OCI-LY7 (cell line): ENCODE measurements at regions of chr9 and their contacts with region 1.

Region 1: DNA sequence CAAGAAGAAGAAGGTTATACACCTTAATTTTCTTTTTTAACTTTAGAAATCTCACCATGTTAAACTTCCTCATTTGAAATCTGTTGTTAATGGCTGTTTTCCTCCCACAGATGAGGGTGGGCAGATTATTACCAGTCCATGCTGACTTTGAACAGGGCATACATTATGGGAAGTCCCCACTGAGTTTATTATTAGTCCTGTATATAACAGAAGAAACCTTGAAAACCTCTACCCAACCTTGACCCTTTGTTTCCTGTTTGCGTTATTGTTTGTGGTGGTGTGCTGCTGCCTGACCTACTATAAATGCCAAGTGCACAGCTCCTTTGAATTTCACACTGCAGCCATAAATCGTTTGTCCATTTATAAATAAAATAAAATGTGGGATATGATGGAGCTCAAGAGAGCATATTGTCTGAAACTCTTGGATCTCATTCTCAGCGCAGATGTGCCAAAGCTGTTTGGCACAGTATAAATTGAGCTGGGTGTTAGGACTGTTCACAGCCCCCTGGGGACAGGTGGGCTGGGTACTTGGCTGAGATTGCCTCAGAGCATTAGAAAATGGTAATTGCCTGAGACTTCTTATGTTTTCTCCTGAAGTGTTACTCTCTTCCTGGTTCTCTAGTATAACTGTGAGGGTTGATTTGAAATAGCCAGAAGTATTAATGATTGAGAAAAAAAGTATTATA is 139.6 kb downstream of the SPATA31D1 start:
- DNase-seq: peak; percentile 95
- H3K4me3 ChIP-seq: peak overlapping the region; percentile 50
- H3K27ac ChIP-seq: peak overlapping the region; percentile 99
- H3K4me1 ChIP-seq: peaks cover 73% of the 10 kb centered on the region
- CTCF ChIP-seq: no peak

Region 2: DNA sequence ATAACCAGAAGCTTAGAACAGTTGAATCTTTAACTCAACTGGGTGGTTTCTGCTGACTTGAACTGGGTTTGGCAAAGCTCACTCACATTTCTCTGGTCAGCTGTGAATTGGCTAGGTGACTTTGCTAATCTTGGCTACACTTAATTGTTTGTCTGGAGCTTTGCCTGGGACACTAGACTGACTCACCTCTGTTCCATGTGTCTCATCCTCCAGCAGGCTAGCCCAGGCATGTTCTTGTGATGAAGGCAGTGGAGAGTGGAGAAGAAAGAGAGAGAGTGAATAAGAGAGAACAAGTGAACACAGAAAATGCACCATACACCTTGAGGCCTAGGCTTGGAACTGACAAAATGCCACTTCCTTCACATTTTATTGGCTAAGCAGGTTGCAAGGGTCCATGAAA is 107.0 kb before region 1 on chr9:
- CTCF ChIA-PET with region 1: no interaction called
- POLR2A ChIA-PET with region 1: no interaction called
- intact Hi-C with region 1: no loop called
- DNase-seq: no peak
- H3K4me3 ChIP-seq: no peak overlapping the region
- H3K27ac ChIP-seq: no peak overlapping the region
- H3K4me1 ChIP-seq: no peaks in the 10 kb centered on the region
- CTCF ChIP-seq: no peak

Region 3: GRCh38 chr9:82031322-82032280 is 96.6 kb before region 1 on chr9:
- CTCF ChIA-PET with region 1: no interaction called
- POLR2A ChIA-PET with region 1: no interaction called
- intact Hi-C with region 1: no loop called
- DNase-seq: no peak
- H3K4me3 ChIP-seq: no peak overlapping the region
- H3K27ac ChIP-seq: no peak overlapping the region
- H3K4me1 ChIP-seq: no peaks in the 10 kb centered on the region
- CTCF ChIP-seq: no peak

Region 4: GRCh38 chr9:82080265-82080664 is 47.9 kb before region 1 on chr9:
- CTCF ChIA-PET with region 1: no interaction called
- POLR2A ChIA-PET with region 1: interaction called, 8 read pairs
- intact Hi-C with region 1: loop called (anchors 1 kb)
- DNase-seq: peak; percentile 86
- H3K4me3 ChIP-seq: peak overlapping the region; percentile 7
- H3K27ac ChIP-seq: peak overlapping the region; percentile 71
- H3K4me1 ChIP-seq: peaks cover 33% of the 10 kb centered on the region
- CTCF ChIP-seq: no peak

Region 5: GRCh38 chr9:82101475-82101874 is 26.7 kb before region 1 on chr9:
- CTCF ChIA-PET with region 1: interaction called, 6 read pairs
- POLR2A ChIA-PET with region 1: interaction called, 36 read pairs
- intact Hi-C with region 1: loop called (anchors 1 kb)
- DNase-seq: peak; percentile 88
- H3K4me3 ChIP-seq: no peak overlapping the region
- H3K27ac ChIP-seq: peak overlapping the region; percentile 41
- H3K4me1 ChIP-seq: peaks cover 47% of the 10 kb centered on the region
- CTCF ChIP-seq: peak; percentile 90

Region 6: DNA sequence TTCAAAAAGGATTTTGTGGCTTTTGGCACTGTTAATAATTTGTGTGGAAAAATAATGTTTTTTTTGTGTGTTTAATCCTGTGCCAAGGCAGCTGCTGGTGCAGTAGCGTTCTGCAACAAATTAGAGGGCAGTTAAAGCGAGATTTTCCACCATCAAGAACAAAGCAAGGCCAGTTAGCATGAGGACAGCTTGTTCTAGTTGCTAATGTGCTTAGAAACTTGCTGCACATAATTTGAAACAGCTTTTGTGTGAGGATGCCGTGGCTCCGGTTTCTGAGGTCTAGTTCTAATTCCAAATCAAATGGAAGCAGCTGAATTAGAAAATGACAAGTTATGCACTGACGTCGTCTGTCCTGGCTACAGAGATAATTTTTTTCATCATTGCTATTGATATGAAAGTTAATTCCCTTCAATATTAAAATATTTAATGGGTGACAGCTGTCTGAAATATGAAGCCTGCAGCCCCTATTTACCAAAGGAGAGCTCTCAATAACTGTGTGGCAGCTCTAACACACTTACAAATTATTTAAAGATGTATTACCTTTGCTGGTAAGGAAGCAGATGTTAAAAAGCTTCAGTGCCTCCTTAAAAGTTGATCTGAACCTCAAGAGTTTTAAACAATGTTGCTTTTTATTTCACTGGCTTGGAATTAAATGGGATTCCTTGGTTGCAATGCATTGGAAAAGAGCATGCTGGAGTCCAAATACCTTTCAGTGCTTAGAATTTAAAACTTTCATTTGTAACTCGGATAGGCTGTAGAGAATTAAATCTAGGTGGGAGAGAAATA is 10.9 kb before region 1 on chr9:
- CTCF ChIA-PET with region 1: interaction called, 3 read pairs
- POLR2A ChIA-PET with region 1: interaction called, 109 read pairs
- intact Hi-C with region 1: no loop called
- DNase-seq: no peak
- H3K4me3 ChIP-seq: no peak overlapping the region
- H3K27ac ChIP-seq: no peak overlapping the region
- H3K4me1 ChIP-seq: peaks cover 26% of the 10 kb centered on the region
- CTCF ChIP-seq: no peak

Region 7: DNA sequence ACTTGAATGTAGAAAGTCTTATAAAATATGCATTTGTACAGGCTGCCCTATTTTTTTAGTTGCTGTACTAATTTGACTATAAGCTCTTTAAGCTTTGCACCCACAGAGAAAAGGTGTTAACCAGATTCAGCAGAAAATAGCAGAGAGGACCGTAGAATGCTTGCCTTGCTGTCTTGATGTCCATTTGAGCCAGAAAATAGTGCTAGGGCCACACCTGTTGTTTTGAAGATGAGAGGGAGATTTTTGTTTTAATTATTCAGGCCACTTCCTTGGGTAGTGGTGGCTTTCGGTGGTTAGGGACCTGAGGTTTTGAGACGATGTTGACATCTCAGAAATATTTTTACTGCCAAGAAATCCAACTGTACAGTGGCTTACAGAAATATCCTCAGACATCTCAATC is 56.4 kb after region 1 on chr9:
- CTCF ChIA-PET with region 1: interaction called, 3 read pairs
- POLR2A ChIA-PET with region 1: interaction called, 46 read pairs
- intact Hi-C with region 1: loop called (anchors 1 kb)
- DNase-seq: peak; percentile 87
- H3K4me3 ChIP-seq: peak overlapping the region; percentile 51
- H3K27ac ChIP-seq: peak overlapping the region; percentile 86
- H3K4me1 ChIP-seq: peaks cover 56% of the 10 kb centered on the region
- CTCF ChIP-seq: no peak